AG04449 (cell line): ENCODE measurements at regions of chr15 and their contacts with region 1.

Region 1: GRCh38 chr15:47196057-47196456 is 521.2 kb upstream of the SEMA6D start:
- DNase-seq: peak; percentile 52
- H3K4me3 ChIP-seq: no peak overlapping the region
- CTCF ChIP-seq: peak; percentile 93

Region 2: DNA sequence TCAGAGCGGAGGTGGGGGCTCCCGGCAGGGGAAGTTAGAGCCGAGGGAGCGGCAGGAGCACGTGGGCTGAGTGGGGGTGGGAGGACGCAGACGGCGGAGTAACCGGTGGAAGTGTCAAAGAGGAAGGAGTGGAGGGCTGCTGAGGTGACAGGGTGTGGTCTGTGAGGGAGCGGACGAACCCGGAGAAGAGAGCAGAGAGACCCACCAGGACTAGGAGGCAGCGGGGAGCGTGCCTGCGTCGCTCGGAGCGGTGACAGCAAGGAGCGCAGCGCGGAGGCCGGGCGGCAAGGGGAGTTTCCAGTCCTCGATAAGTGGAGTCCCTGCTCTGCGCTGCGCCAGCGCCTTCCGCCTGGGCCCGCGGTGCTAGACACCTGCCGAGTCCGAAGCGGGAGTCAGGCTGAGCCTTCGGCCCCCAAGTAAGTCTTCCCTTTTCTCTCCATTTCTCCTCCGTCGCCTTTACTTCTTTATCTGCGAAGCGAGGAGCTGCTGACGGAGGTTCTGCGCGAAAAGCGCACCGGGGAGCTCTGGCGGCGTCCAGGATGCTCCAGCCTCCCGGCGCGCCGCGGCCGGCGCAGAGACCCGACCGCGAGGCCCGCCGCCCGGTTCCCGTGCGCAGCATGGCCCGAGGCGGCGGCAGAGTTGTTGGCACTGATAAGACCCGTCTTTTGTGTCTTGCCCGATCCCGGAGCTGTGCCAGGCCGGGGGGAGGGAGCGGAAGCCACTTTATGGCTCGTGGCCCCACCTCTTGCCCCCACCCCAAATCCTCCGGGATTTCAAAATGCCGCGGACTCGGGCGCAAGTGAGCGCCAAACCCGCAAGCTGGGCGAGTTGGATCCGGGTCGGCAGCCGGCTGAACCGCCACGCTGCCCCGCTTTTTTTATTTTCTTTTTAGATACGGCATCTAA is 11.8 kb before region 1 on chr15:
- CTCF ChIA-PET with region 1: interaction called, 16 read pairs
- POLR2A ChIA-PET with region 1: interaction called, 3 read pairs
- DNase-seq: no peak
- H3K4me3 ChIP-seq: peak overlapping the region; percentile 45
- CTCF ChIP-seq: no peak

Region 3: GRCh38 chr15:47717036-47717611 is 521.1 kb after region 1 on chr15 and contains the start of gene SEMA6D:
- CTCF ChIA-PET with region 1: interaction called, 10 read pairs
- POLR2A ChIA-PET with region 1: no interaction called
- DNase-seq: peak; percentile 21
- H3K4me3 ChIP-seq: peak within 1 kb of the TSS; percentile 70
- CTCF ChIP-seq: peak; percentile 29

Region 4: DNA sequence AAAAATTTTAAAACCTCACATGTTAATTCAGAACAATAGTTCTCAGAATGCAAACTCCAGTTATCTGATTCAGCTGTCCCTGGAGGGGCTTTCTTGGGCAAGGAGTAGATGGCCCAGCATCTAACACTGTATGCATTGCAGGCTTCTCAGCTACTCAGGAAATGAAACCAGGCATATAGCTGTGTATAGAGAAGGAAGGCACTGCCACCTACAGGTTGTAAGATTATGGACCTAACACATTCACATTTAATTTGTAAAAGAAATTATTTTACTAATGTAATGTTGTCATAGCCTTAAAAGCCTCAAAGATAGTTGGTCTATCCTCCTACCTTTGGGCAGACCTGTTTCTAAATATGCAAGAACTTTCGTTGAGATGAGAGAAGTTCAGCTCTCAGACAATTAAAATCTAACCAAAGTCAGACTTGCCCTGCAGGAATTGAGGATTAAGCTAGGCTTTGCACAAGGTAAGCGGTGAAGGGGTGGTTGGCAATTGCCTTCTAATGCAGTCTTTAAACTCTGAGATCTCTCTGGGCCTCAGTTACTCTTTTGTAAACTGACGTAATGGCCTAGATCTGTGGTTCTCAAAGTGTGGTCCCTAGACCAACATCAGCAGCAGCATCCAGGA is 792.0 kb after region 1 on chr15:
- CTCF ChIA-PET with region 1: interaction called, 129 read pairs
- POLR2A ChIA-PET with region 1: no interaction called
- DNase-seq: peak; percentile 23
- H3K4me3 ChIP-seq: no peak overlapping the region
- CTCF ChIP-seq: peak; percentile 56

Region 5: DNA sequence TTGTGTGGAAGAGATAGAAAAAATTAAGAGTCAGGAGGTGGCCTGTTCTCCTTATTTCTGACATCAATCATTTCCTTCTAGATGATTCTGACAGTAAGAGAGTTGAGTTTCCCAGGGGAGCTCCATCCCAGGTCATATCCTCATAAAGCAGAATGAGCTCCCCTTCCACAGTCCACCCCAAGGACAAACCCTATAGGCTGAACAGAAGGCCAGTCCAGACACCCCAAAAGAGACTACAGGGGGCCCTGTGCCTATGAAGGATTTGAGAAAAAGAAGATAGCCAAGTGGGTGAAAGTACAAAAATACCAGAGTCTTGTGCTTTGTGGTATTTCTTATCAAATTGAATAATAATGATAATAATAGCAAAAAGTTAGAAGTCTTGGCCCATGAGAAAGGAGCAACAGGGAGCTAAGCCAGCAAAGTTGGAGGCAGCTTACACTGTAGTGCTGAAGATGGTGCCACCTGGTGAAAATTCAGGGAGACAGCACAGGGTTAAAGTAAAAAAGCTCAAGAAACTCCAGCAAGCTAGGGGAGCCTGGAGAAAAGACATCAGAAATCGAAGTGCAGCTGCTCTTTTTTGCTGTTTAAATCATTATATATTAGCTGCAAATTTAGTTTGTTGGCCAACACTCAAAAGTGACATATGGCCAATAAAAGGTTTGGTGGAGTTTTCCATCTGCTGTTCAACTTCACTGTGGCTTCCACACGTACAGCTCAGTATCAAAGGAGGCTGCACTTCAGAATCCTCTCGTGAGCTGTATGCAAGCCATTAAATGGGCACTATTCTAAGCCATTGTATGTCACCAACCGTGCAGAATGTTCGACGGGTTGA is 888.9 kb after region 1 on chr15:
- CTCF ChIA-PET with region 1: interaction called, 45 read pairs
- POLR2A ChIA-PET with region 1: no interaction called
- DNase-seq: no peak
- H3K4me3 ChIP-seq: no peak overlapping the region
- CTCF ChIP-seq: peak; percentile 38

Region 6: DNA sequence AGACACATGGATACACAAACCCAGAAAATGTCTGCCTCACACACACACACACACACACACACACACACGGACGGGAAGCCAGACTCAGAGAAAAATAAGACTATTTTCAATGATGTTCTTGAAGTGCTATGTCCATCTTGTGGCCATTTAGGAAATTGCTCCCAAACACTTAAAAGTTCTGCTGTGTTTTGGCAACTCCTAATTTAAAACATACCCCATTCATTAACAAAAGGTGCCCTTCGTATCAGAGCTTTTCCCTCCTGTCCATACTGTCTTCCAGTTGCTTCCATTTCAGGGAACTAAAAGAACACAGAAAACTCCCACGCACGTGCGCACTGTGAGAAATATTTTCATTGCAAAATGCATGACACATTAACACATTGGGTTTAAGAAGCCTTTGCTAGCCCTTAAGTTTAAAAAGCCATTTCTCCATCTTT is 1054.6 kb after region 1 on chr15:
- CTCF ChIA-PET with region 1: interaction called, 17 read pairs
- POLR2A ChIA-PET with region 1: no interaction called
- DNase-seq: peak; percentile 40
- H3K4me3 ChIP-seq: no peak overlapping the region
- CTCF ChIP-seq: peak; percentile 51